ENCODE measurements at regions of chr15 and their contacts with region 1.

Region 1: GRCh38 chr15:26739791-26740190 is 33.1 kb downstream of the GABRB3 start:
- DNase-seq: no peak
- H3K4me3 ChIP-seq: no peak overlapping the region
- H3K27ac ChIP-seq: no peak overlapping the region
- H3K4me1 ChIP-seq: no peaks in the 10 kb centered on the region
- H3K27me3 ChIP-seq: no peaks in the 10 kb centered on the region
- CTCF ChIP-seq: no peak
- EP300 ChIP-seq: no peak
- POLR2A ChIP-seq: no peak

Region 2: DNA sequence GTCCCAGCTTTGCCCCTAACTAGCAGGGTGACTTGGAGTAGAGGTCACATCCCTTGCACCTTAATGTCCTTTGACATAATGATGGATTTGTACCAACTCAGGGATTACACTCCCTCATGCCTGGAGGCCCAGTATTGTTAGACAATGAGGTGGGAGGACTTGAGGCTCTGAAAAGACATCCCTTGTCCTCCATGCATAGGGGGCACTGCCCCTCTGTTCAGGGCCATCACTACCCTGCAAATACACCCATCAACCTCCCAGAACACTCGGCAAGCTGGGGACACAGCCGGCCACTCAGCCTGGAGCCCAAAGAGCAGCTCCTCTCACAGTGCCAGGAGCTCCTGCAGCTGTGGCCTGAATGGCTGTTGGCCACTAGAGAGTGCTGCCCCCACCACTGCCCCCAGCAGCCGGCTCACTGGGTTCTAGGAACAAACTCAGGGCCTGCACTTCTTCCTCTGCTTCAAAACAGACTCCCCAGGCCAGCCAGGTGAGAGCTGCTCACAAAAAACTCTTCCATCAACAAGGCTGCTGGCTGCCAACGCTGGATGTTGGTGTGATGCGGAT is 57.1 kb before region 1 on chr15:
- intact Hi-C with region 1: loop called in 1 of 4 experiments (anchors 10 kb)
- DNase-seq: no peak
- H3K4me3 ChIP-seq: no peak overlapping the region
- H3K27ac ChIP-seq: no peak overlapping the region
- H3K4me1 ChIP-seq: no peaks in the 10 kb centered on the region
- H3K27me3 ChIP-seq: no peaks in the 10 kb centered on the region
- CTCF ChIP-seq: no peak
- EP300 ChIP-seq: no peak
- POLR2A ChIP-seq: no peak

Region 3: GRCh38 chr15:26848498-26848897 is 108.7 kb after region 1 on chr15:
- intact Hi-C with region 1: loop called in 1 of 4 experiments (anchors 10 kb)
- DNase-seq: no peak
- H3K4me3 ChIP-seq: no peak overlapping the region
- H3K27ac ChIP-seq: no peak overlapping the region
- H3K4me1 ChIP-seq: no peaks in the 10 kb centered on the region
- H3K27me3 ChIP-seq: no peaks in the 10 kb centered on the region
- CTCF ChIP-seq: no peak
- EP300 ChIP-seq: no peak
- POLR2A ChIP-seq: no peak

Measured in ovary (tissue), 10 donors.